Calu3 (cell line): ENCODE measurements at regions of chr17 and their contacts with region 1.

Region 1: DNA sequence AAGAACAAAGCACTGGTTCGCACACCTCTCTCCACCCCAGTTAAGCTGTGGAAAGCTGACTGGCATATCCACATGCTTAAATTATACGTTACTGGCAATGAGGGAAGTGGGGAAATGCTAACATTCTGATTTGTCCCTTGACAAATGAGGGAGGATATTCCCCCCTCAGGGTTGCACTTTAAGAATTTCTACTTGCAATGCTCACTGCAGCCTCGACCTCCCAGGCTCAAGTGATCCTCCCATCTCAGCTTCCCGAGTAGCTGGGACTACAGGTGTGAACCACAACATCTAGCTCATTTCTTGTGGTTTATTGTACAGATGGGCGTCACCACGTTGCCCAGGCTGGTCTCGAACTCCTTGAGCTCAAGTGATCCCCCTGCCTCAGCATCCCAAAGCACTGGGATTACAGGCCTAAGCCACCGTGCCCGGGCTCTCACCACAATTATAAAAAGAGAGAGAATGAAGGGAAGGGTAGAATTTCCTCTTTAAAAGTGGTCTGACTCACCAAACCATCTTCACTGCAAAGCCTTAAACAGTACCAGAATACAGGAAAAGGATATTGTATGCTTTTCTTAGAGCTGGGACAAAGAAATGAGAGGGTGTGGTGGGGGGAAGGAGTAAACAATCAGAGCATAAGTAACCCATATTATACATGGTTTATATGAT is 38.9 kb downstream of the KANSL1 start:
- DNase-seq: no peak
- H3K4me3 Mint-ChIP-seq: no peak overlapping the region
- H3K27ac Mint-ChIP-seq: no peak overlapping the region
- H3K4me1 Mint-ChIP-seq: peaks cover 69% of the 10 kb centered on the region
- H3K27me3 Mint-ChIP-seq: no peaks in the 10 kb centered on the region
- CTCF ChIP-seq: no peak

Region 2: DNA sequence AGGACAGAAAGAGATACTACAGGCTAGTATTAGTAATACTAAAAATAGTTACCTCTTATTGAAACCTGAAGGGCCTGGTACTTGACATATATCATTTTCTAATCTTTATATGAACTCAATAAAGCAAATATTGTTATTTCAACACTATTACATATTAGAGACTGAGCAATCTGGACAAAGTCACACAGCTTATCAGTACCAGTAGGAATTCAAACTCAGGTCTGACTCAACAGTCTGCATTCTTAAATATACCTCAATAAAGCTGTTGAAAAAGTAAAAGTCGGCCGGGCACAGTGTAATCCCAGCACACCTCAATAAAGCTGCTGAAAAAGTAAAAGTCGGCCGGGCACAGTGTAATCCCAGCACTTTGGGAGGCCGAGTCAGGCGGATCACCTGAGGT is 28.5 kb before region 1 on chr17:
- CTCF ChIA-PET with region 1: interaction called, 9 read pairs
- intact Hi-C with region 1: loop called (anchors 2 kb)
- DNase-seq: no peak
- H3K4me3 Mint-ChIP-seq: no peak overlapping the region
- H3K27ac Mint-ChIP-seq: no peak overlapping the region
- H3K4me1 Mint-ChIP-seq: peaks cover 39% of the 10 kb centered on the region
- H3K27me3 Mint-ChIP-seq: no peaks in the 10 kb centered on the region
- CTCF ChIP-seq: no peak

Region 3: DNA sequence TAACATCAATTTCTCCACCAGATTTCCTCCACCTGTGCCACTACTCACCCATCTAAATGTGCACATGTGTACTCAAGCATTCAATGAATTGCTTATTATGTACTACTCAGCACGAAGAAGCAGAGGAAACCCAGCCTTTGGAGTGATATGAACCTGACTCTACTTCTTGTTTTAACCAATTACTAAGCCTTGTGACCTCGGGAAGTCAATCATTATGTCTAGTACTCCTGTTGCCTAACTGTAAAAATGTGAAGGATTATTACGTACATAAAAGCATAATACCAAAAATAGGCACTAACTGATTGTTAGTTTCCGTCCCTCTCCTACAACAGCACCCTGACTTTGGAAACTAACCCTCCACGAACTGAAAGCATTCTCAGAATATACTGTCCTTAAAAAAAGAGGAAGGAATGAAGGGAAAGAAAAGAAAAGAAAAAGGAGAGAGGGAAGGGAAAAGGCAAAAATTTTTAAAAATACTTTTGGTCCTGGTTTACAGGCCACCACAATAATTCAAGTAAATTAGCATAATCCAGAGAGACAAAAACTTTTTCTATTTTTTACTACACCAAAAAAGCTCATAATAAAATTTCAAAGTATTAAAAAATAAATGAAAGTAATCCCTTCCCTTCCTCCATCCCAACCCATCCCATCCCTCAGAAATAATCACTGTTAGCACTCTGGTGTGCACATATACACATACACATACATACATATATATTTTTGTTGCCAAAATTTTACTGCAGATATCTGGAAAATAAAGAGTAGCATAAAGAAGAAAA is 14.7 kb before region 1 on chr17:
- CTCF ChIA-PET with region 1: interaction called, 22 read pairs
- intact Hi-C with region 1: loop called (anchors 2 kb)
- DNase-seq: no peak
- H3K4me3 Mint-ChIP-seq: no peak overlapping the region
- H3K27ac Mint-ChIP-seq: peak overlapping the region; percentile 28
- H3K4me1 Mint-ChIP-seq: peaks cover 63% of the 10 kb centered on the region
- H3K27me3 Mint-ChIP-seq: no peaks in the 10 kb centered on the region
- CTCF ChIP-seq: no peak